OCI-LY7 (cell line): ENCODE measurements at regions of chr10 and their contacts with region 1.

Region 1: GRCh38 chr10:90787393-90788198 is 70.2 kb downstream of the HTR7 start:
- DNase-seq: peak; percentile 35
- H3K4me3 ChIP-seq: no peak overlapping the region
- H3K27ac ChIP-seq: no peak overlapping the region
- H3K4me1 ChIP-seq: no peaks in the 10 kb centered on the region
- CTCF ChIP-seq: peak; percentile 85

Region 2: DNA sequence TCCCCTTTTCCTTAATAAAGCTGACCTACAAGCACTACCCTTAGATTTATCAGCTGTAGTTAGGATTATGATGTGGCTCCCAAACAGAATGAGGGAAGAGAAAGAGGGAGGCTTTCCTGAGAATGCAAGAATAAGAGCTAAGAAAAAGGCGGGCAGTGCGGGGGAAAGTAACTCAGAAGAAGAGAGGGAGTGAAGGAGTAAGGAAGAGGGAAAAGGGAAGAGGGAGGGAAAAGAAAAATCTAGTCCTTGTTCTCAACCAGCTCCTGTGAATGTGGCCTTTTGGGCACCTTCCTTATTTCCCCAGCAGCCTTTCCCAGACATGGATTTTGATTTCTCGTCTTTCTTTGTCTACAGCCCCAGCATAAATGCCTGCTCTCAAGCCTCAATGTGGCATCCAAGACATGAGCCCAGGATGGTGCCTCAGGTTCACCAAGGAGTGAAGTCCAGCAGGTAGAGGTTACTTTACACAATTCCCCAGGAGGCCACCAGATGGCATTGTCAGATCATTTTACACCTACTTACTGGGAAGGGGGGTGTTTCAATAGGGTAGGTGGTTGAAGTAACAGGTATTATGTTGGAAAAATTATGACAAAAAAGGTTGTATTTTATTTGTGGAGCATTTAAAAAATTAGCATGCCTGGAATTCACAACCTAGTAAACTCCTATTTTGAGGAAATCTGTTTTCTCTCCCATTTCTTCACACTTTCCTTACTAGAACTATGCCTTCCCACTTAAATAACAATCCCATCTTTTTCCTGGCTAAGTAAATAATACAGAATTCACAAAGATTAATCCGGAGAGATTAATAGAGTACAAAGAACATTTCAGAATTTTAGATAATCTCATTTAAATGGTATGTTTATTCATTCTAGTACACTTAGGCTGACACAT is 36.2 kb before region 1 on chr10:
- CTCF ChIA-PET with region 1: interaction called, 4 read pairs
- POLR2A ChIA-PET with region 1: interaction called, 3 read pairs
- intact Hi-C with region 1: loop called (anchors 2 kb)
- DNase-seq: peak; percentile 44
- H3K4me3 ChIP-seq: no peak overlapping the region
- H3K27ac ChIP-seq: no peak overlapping the region
- H3K4me1 ChIP-seq: no peaks in the 10 kb centered on the region
- CTCF ChIP-seq: peak; percentile 86

Region 3: GRCh38 chr10:90862908-90863514 is 75.4 kb after region 1 on chr10:
- CTCF ChIA-PET with region 1: no interaction called
- POLR2A ChIA-PET with region 1: no interaction called
- intact Hi-C with region 1: loop called (anchors 2 kb)
- DNase-seq: peak; percentile 13
- H3K4me3 ChIP-seq: no peak overlapping the region
- H3K27ac ChIP-seq: no peak overlapping the region
- H3K4me1 ChIP-seq: peaks cover 4% of the 10 kb centered on the region
- CTCF ChIP-seq: peak; percentile 86

Region 4: DNA sequence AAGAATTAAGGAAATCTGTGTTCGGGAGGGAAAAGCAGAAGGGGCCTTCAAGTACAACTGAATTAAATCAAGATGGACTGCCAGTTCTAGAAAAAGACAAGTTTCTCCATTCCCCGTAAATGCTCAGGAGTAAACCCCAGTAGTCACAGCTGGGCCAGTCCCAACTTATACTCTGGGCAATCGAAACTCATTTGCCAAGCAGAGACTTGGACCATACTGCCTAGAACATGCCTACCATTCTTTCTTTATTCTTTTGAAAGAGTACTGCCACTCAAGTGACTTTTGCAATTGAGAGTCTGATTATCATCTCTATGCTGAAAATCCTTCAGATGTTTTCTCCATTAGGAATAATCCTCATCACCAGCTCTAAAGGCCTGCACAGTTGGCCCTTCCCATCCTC is 105.6 kb after region 1 on chr10:
- CTCF ChIA-PET with region 1: no interaction called
- POLR2A ChIA-PET with region 1: no interaction called
- intact Hi-C with region 1: no loop called
- DNase-seq: no peak
- H3K4me3 ChIP-seq: no peak overlapping the region
- H3K27ac ChIP-seq: no peak overlapping the region
- H3K4me1 ChIP-seq: no peaks in the 10 kb centered on the region
- CTCF ChIP-seq: no peak

Region 5: GRCh38 chr10:91349381-91349780 is 561.8 kb after region 1 on chr10:
- CTCF ChIA-PET with region 1: no interaction called
- POLR2A ChIA-PET with region 1: no interaction called
- intact Hi-C with region 1: no loop called
- DNase-seq: no peak
- H3K4me3 ChIP-seq: no peak overlapping the region
- H3K27ac ChIP-seq: no peak overlapping the region
- H3K4me1 ChIP-seq: no peaks in the 10 kb centered on the region
- CTCF ChIP-seq: no peak

Region 6: DNA sequence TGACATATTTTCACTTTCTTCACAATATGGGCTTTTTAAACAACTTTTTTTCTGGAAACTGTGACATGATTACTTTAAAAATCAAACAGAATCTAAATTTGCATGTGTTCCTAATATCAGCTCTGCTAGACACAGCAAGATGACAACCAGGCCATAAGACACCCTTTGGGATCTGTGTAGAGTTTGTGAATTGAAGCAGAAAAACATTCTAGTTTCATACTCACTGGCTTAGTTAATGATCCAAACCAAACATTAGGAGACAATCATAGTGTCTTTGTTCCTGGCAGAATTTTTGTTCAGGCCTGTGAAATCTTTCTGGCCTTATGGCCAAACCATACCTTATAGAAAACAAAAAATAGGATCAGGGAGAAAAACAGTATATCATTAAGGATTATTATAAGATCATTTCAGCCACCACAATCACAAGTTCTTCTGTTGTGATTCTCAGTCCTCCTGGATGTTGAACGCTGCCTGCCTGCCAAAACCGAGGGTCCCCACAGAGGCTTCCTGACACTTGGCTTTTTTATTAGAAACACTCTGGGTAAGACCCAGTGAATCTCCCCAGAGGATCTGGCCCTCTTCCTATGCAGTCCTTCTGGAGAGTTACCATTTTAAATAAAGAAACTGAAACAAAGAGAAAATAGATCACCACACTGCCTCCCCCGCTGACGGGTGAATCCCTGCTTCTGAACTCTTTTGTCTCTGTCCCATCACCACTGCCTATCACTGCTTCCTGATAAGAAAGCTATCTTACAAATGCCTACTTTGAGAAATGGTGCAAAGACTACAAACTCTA is 924.5 kb after region 1 on chr10:
- CTCF ChIA-PET with region 1: no interaction called
- POLR2A ChIA-PET with region 1: no interaction called
- intact Hi-C with region 1: loop called (anchors 5 kb)
- DNase-seq: no peak
- H3K4me3 ChIP-seq: no peak overlapping the region
- H3K27ac ChIP-seq: no peak overlapping the region
- H3K4me1 ChIP-seq: no peaks in the 10 kb centered on the region
- CTCF ChIP-seq: no peak